ENCODE measurements at regions of chr7 and their contacts with region 1.

Region 1: GRCh38 chr7:134140889-134141867 is 14.0 kb downstream of the LRGUK start:
- DNase-seq: peak; percentile 62 to 77
- H3K4me3 ChIP-seq: no peak overlapping the region
- H3K4me3 Mint-ChIP-seq: no peak overlapping the region
- H3K27ac Mint-ChIP-seq: no peak overlapping the region
- H3K4me1 ChIP-seq: no peaks in the 10 kb centered on the region
- H3K4me1 Mint-ChIP-seq: no peaks in the 10 kb centered on the region
- H3K27me3 ChIP-seq: no peaks in the 10 kb centered on the region
- H3K27me3 Mint-ChIP-seq: peaks cover 4% of the 10 kb centered on the region
- CTCF ChIP-seq: peak; percentile 85 to 93

Region 2: DNA sequence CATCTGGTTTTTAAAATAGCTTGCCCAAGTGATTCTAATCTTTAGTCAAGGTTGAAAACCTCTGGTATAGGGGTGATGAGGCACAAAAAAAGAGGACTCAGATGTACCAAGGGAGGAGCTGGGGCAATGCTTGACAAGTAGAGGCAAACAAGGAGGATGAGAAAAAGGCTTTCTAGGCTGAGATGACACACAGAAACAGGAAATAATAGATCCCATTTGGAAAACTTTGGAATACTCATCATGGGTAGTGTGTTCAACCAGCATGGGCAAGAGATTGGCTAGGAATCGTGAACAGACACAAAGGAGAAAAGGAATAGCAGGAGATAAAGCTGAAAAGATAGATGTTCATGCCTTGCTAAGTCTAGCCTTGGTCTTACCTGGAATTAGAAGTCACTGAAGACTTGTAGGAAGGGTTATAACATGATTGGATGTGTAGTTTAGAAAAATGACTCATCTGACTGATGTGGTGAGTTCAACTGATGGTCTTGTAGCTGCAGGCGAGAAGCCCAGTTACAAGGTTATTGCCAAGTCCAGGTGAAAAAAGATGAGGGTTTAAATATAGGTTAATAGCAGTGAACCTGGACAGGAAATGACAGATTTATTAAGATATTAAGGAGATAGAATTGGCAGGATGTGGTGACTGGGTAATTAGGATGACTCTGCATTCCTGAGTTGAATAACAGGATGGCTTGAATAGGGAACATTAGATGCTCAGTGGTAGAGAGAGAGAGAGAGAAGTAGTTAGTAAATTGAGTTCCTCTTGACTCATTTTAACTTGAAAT is 228.1 kb before region 1 on chr7:
- CTCF ChIA-PET with region 1: no interaction called
- POLR2A ChIA-PET with region 1: no interaction called
- intact Hi-C with region 1: no loop called
- DNase-seq: no peak
- H3K4me3 ChIP-seq: no peak overlapping the region
- H3K4me3 Mint-ChIP-seq: no peak overlapping the region
- H3K27ac Mint-ChIP-seq: no peak overlapping the region
- H3K4me1 ChIP-seq: no peaks in the 10 kb centered on the region
- H3K4me1 Mint-ChIP-seq: no peaks in the 10 kb centered on the region
- H3K27me3 ChIP-seq: no peaks in the 10 kb centered on the region
- H3K27me3 Mint-ChIP-seq: no peaks in the 10 kb centered on the region
- CTCF ChIP-seq: no peak

Region 3: DNA sequence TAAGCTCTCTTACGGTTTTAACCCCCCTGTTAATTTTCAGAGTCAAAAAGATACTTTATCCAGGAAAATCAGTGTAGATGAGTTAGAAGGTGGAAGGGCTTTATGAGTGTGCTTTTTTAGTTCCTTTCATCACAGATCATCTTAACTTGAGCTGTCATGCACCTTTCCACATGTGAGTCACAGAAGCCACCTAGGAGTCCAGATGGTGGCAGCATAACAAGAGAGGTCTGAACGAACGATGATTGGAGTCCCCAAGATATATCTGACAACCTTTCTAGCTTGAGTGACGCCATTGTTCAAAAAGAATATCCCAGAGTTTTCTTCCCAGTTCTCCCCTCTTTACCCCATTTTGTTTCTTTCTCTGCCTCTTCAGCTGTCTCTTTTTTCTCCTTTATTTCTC is 130.1 kb before region 1 on chr7:
- CTCF ChIA-PET with region 1: interaction called, 6 read pairs
- POLR2A ChIA-PET with region 1: no interaction called
- intact Hi-C with region 1: loop called (anchors 1 kb)
- DNase-seq: no peak
- H3K4me3 ChIP-seq: no peak overlapping the region
- H3K4me3 Mint-ChIP-seq: no peak overlapping the region
- H3K27ac Mint-ChIP-seq: no peak overlapping the region
- H3K4me1 ChIP-seq: peaks cover 8% of the 10 kb centered on the region; the same call in 1 of the 2 replicates
- H3K4me1 Mint-ChIP-seq: peaks cover 12% of the 10 kb centered on the region
- H3K27me3 ChIP-seq: no peaks in the 10 kb centered on the region
- H3K27me3 Mint-ChIP-seq: no peaks in the 10 kb centered on the region
- CTCF ChIP-seq: no peak

Region 4: GRCh38 chr7:134029743-134030142 is 111.4 kb before region 1 on chr7:
- CTCF ChIA-PET with region 1: interaction called, 11 read pairs
- POLR2A ChIA-PET with region 1: no interaction called
- intact Hi-C with region 1: loop called (anchors 1 kb)
- DNase-seq: no peak
- H3K4me3 ChIP-seq: no peak overlapping the region
- H3K4me3 Mint-ChIP-seq: no peak overlapping the region
- H3K27ac Mint-ChIP-seq: no peak overlapping the region
- H3K4me1 ChIP-seq: peaks cover 14% of the 10 kb centered on the region
- H3K4me1 Mint-ChIP-seq: peaks cover 24% of the 10 kb centered on the region
- H3K27me3 ChIP-seq: no peaks in the 10 kb centered on the region
- H3K27me3 Mint-ChIP-seq: no peaks in the 10 kb centered on the region
- CTCF ChIP-seq: no peak

Region 5: GRCh38 chr7:134114992-134115391 is 26.2 kb before region 1 on chr7:
- CTCF ChIA-PET with region 1: no interaction called
- POLR2A ChIA-PET with region 1: no interaction called
- intact Hi-C with region 1: no loop called
- DNase-seq: no peak
- H3K4me3 ChIP-seq: no peak overlapping the region
- H3K4me3 Mint-ChIP-seq: no peak overlapping the region
- H3K27ac Mint-ChIP-seq: no peak overlapping the region
- H3K4me1 ChIP-seq: no peaks in the 10 kb centered on the region
- H3K4me1 Mint-ChIP-seq: no peaks in the 10 kb centered on the region
- H3K27me3 ChIP-seq: no peaks in the 10 kb centered on the region
- H3K27me3 Mint-ChIP-seq: peaks cover 3% of the 10 kb centered on the region
- CTCF ChIP-seq: no peak

Region 6: DNA sequence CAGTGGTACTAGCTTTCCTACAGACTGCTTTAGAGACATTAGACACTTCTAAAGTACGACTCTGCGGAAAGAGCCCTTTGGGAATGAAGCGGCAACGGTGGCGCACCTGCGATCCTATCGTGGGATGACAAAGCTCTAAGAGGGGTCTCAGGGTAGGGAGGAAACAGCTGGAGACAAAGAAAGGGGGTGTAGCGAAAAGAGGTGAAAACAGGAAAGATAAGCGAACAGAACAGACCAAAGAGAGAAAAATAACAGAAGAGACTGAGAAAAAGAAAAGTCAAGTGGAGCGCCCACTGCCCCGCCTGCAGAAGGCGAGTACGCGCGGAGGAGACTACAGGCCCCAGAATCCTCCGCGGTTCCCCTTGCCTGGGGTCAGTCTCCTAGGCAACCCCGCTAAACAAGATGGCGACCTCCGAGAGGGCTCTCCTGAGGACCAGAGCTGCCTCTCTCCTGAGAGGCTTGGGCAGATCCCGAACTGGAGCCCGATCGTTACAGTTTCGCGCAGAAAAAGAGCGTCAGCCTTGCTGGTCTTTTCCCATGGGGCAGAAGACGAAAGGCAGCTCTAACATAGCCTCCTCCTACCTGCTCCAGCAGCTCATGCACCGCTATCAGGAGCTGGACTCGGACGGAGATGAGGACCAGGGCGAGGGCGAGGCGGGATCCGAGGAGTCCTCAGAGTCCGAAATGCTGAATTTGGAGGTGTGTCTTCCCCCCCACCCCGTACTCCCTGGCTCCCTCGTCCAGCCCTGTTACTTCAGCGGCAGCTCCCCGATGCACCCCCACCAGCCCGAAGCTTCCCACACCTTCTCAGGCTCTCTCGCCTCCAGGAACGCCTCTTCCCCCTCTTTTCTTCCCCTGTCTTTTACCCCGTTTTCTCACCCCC is 14.0 kb before region 1 on chr7 and contains the start of gene LRGUK:
- CTCF ChIA-PET with region 1: interaction called, 10 read pairs
- POLR2A ChIA-PET with region 1: no interaction called
- intact Hi-C with region 1: no loop called
- DNase-seq: peak; percentile 84 to 87
- H3K4me3 ChIP-seq: peak within 1 kb of the TSS; percentile 79
- H3K4me3 Mint-ChIP-seq: peak within 1 kb of the TSS; percentile 77
- H3K27ac Mint-ChIP-seq: peak within 1 kb of the TSS; percentile 63
- H3K4me1 ChIP-seq: no peaks in the 10 kb centered on the region
- H3K4me1 Mint-ChIP-seq: peaks cover 7% of the 10 kb centered on the region
- H3K27me3 ChIP-seq: no peaks in the 10 kb centered on the region
- H3K27me3 Mint-ChIP-seq: peaks cover 27% of the 10 kb centered on the region
- CTCF ChIP-seq: no peak
- total RNA-seq, gene LRGUK: 0.09 TPM in 1 of 2 replicates, not detected in the other

Region 7: GRCh38 chr7:134327896-134328295 is 186.7 kb after region 1 on chr7:
- CTCF ChIA-PET with region 1: interaction called, 3 read pairs
- POLR2A ChIA-PET with region 1: no interaction called
- intact Hi-C with region 1: loop called (anchors 1 kb)
- DNase-seq: peak; percentile 56 to 62
- H3K4me3 ChIP-seq: no peak overlapping the region
- H3K4me3 Mint-ChIP-seq: no peak overlapping the region
- H3K27ac Mint-ChIP-seq: no peak overlapping the region
- H3K4me1 ChIP-seq: no peaks in the 10 kb centered on the region
- H3K4me1 Mint-ChIP-seq: peaks cover 7% of the 10 kb centered on the region
- H3K27me3 ChIP-seq: no peaks in the 10 kb centered on the region
- H3K27me3 Mint-ChIP-seq: peaks cover 13% of the 10 kb centered on the region
- CTCF ChIP-seq: peak; percentile 29 to 51

Region 8: GRCh38 chr7:134355927-134356326 is 214.7 kb after region 1 on chr7:
- CTCF ChIA-PET with region 1: interaction called, 4 read pairs
- POLR2A ChIA-PET with region 1: no interaction called
- intact Hi-C with region 1: loop called (anchors 1 kb)
- DNase-seq: no peak
- H3K4me3 ChIP-seq: no peak overlapping the region
- H3K4me3 Mint-ChIP-seq: no peak overlapping the region
- H3K27ac Mint-ChIP-seq: no peak overlapping the region
- H3K4me1 ChIP-seq: no peaks in the 10 kb centered on the region
- H3K4me1 Mint-ChIP-seq: no peaks in the 10 kb centered on the region
- H3K27me3 ChIP-seq: no peaks in the 10 kb centered on the region
- H3K27me3 Mint-ChIP-seq: peaks cover 3% of the 10 kb centered on the region
- CTCF ChIP-seq: no peak

Region 9: GRCh38 chr7:134420424-134421125 is 279.4 kb after region 1 on chr7:
- CTCF ChIA-PET with region 1: interaction called, 10 read pairs
- POLR2A ChIA-PET with region 1: no interaction called
- intact Hi-C with region 1: loop called (anchors 5 kb)
- DNase-seq: peak; percentile 53 to 63
- H3K4me3 ChIP-seq: no peak overlapping the region
- H3K4me3 Mint-ChIP-seq: no peak overlapping the region
- H3K27ac Mint-ChIP-seq: no peak overlapping the region
- H3K4me1 ChIP-seq: peaks cover 7% of the 10 kb centered on the region
- H3K4me1 Mint-ChIP-seq: peaks cover 11% of the 10 kb centered on the region
- H3K27me3 ChIP-seq: no peaks in the 10 kb centered on the region
- H3K27me3 Mint-ChIP-seq: peaks cover 6% of the 10 kb centered on the region
- CTCF ChIP-seq: peak; percentile 61 to 67

Measured in Caco-2 (cell line).